Activated CD4-positive, alpha-beta memory T cell treated with anti-CD3 and anti-CD28 coated beads, Interleukin-2, amount 10 ng/mL, durations not matched to agents 7 days and 5 days (primary cell): ENCODE measurements at regions of chr4 and their contacts with region 1.

Region 1: DNA sequence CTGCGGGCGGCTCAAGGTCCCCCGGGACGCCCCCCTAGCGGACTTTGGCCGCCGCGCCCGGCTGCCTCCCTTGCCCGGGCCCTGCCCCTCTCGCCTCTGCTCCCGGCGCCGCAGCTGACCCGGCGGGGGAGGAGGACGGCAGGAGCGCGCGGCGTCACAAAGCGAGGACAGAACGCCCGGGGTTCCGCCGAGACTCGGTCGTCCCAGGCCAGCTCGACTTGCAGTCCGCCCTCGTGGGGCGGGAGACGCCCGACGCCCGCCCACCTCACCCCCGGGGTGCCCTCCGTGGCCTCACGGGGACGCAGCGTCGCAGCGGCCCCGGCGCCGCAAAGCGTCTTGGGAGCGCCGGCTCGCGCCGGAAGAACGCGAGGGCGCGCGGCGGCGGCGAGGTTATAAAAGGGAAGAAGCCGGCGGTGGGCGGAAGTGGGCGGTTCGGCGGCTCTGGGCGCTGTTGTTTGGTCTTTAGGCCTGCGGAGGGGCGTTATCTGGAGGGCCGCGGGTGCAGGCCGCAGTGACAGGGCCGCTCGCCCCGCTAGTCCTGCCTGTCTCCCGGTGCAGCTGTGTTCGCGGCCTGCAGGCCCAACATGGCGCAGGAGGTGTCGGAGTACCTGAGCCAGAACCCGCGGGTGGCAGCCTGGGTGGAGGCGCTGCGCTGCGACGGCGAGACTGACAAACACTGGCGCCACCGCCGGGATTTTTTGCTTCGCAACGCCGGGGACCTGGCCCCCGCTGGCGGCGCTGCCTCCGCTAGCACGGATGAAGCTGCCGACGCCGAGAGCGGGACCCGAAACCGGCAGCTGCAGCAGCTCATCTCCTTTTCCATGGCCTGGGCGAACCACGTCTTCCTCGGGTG is at the start of gene CDKN2AIP:
- DNase-seq: peak; percentile 94
- H3K4me3 Mint-ChIP-seq: peak within 1 kb of the TSS; percentile 98
- H3K27ac Mint-ChIP-seq: peak within 1 kb of the TSS; percentile 99
- H3K4me1 Mint-ChIP-seq: peaks cover 48% of the 10 kb centered on the region
- H3K27me3 Mint-ChIP-seq: no peaks in the 10 kb centered on the region
- total RNA-seq, gene CDKN2AIP: 30.5 to 30.9 TPM

Region 2: DNA sequence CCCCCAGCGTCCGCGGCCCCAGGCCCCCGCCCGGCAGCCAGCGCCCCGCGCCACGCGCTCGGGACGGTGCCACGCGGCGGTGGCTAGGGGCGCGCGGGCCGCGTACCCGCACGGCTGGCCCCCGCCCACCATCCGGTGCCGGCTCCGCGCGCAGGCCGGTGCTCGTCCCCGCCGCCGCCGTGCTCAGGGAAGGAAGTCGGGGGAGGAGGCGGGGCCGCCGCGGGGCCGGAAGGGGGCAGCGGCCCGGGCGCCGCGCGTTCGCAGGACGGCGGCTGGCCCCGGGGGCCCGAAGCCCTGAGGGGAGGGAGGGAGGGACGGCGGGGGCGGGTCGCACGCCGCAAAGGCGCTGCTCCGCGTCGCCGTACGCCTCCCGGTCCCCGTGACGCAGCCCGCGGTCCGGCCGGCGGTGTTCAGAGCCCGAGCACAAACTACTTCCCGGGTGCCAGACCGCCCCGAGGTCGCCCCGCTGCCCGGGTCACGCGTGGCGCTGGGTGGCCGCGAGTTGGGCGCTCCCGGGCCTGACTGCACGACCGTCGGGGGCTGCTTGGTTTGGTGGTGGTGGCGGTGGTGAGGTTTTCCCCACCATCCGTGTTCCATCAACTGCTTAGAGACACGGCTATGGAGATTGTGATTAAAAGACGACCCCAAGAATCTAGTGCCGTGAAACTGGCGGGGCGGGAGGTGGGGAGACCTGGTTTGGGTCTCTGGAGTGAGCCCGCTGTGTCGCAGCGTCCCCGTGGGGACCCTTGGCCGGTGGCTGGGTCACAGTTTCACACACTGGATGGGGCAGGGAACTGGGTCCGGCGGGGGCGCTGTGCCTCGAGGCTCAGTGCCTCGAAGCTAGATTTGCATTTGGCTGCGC is 527.0 kb before region 1 on chr4 and contains the start of gene DCTD:
- CTCF ChIA-PET with region 1: no interaction called
- POLR2A ChIA-PET with region 1: interaction called, 14 read pairs
- DNase-seq: peak; percentile 84
- H3K4me3 Mint-ChIP-seq: peak within 1 kb of the TSS; percentile 83
- H3K27ac Mint-ChIP-seq: peak within 1 kb of the TSS; percentile 91
- H3K4me1 Mint-ChIP-seq: peaks cover 51% of the 10 kb centered on the region
- H3K27me3 Mint-ChIP-seq: peaks cover 6% of the 10 kb centered on the region
- total RNA-seq, gene DCTD: 71.0 to 72.9 TPM

Region 3: GRCh38 chr4:183407128-183407585 is 37.3 kb before region 1 on chr4:
- CTCF ChIA-PET with region 1: interaction called, 7 read pairs
- POLR2A ChIA-PET with region 1: interaction called, 13 read pairs
- DNase-seq: peak; percentile 89
- H3K4me3 Mint-ChIP-seq: peak overlapping the region; percentile 67
- H3K27ac Mint-ChIP-seq: peak overlapping the region; percentile 73
- H3K4me1 Mint-ChIP-seq: peaks cover 14% of the 10 kb centered on the region
- H3K27me3 Mint-ChIP-seq: no peaks in the 10 kb centered on the region

Region 4: GRCh38 chr4:183455431-183456195 is 11.2 kb after region 1 on chr4:
- CTCF ChIA-PET with region 1: interaction called, 5 read pairs
- POLR2A ChIA-PET with region 1: interaction called, 10 read pairs
- DNase-seq: peak; percentile 48
- H3K4me3 Mint-ChIP-seq: no peak overlapping the region
- H3K27ac Mint-ChIP-seq: peak overlapping the region; percentile 59
- H3K4me1 Mint-ChIP-seq: peaks cover 20% of the 10 kb centered on the region
- H3K27me3 Mint-ChIP-seq: no peaks in the 10 kb centered on the region

Region 5: GRCh38 chr4:183659029-183659871 is 214.8 kb after region 1 on chr4 and contains the starts of genes RWDD4 and TRAPPC11:
- CTCF ChIA-PET with region 1: interaction called, 4 read pairs
- POLR2A ChIA-PET with region 1: interaction called, 12 read pairs
- DNase-seq: peak; percentile 97
- H3K4me3 Mint-ChIP-seq: peak within 1 kb of the TSS; percentile 91
- H3K27ac Mint-ChIP-seq: peak within 1 kb of the TSS; percentile 89
- H3K4me1 Mint-ChIP-seq: peaks cover 34% of the 10 kb centered on the region
- H3K27me3 Mint-ChIP-seq: no peaks in the 10 kb centered on the region
- total RNA-seq, gene RWDD4: 13.0 to 15.3 TPM
- total RNA-seq, gene TRAPPC11: 29.7 to 36.1 TPM